ENCODE measurements at regions of chr13 and their contacts with region 1.

Region 1: DNA sequence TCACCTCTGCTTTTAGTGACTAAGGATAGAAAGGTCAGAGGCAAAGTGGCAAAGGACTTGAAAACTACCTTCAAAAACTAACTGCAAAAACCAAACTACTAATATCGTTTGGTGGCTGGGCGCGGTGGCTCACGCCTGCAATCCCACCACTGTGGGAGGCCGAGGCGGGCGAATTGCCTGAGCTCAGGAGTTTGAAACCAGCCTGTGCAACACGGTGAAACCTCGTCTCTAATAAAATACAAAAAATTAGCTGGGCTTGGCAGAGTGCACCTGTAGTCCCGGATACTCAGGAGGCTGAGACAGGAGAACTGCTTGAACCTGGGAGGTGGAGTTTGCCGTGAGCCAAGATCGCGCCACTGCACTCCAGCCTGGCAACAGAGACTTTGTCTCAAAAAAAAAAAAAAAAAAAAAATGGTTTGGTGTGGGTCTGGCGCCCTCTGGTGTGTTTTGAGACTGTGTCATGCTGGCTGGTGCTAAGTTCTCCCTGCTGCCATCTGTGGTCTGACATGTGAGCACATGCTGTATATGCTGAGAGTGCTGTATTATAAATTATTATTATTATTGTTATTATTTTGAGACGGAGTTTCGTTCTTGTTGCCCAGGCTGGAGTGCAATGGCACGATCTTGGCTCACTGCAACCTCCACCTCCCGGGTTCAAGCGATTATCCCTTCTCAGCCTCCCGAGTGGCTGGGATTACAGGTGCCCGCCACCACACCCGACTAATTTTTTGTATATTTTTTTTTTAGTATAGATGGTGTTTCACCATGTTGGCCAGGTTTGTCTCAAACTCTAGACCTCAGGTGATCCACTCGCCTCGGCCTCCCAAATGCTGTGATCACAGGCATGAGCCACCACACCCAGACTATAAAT is 36.0 kb upstream of the RNF17 start:
- DNase-seq: peak; percentile 45 to 84
- H3K4me3 ChIP-seq: no peak overlapping the region
- CTCF ChIP-seq: peak in 1 of 3 donors; percentile 31
- POLR2A ChIP-seq: no peak

Region 2: DNA sequence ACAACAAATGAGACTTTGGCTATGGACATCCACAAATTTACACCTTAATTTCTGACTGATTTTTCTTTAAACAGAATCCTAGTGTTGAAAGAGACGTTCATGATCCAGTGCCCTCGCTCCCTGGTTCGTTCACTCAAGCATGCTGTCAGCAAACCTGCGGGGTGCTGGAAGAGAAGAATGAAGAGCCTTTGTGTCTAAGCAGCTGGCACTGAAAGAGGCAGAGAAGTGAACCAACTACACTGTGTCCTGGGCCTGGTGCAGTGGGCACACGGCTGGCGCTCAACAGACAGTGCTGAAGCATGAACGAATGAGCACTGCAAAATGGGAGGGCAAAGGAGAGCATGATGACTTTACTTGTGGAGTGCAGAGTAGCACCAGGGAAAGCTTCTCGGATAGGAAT is 885.6 kb before region 1 on chr13:
- intact Hi-C with region 1: no loop called
- DNase-seq: no peak
- H3K4me3 ChIP-seq: no peak overlapping the region
- CTCF ChIP-seq: no peak
- POLR2A ChIP-seq: no peak

Region 3: GRCh38 chr13:24574847-24575246 is 153.1 kb before region 1 on chr13:
- intact Hi-C with region 1: loop called (anchors 10 kb)
- DNase-seq: no peak
- H3K4me3 ChIP-seq: no peak overlapping the region
- CTCF ChIP-seq: no peak
- POLR2A ChIP-seq: no peak

Region 4: GRCh38 chr13:24709186-24709913 is 18.6 kb before region 1 on chr13:
- intact Hi-C with region 1: no loop called
- DNase-seq: peak in 1 of 2 donors; percentile 60
- H3K4me3 ChIP-seq: no peak overlapping the region
- CTCF ChIP-seq: no peak
- POLR2A ChIP-seq: no peak

Region 5: DNA sequence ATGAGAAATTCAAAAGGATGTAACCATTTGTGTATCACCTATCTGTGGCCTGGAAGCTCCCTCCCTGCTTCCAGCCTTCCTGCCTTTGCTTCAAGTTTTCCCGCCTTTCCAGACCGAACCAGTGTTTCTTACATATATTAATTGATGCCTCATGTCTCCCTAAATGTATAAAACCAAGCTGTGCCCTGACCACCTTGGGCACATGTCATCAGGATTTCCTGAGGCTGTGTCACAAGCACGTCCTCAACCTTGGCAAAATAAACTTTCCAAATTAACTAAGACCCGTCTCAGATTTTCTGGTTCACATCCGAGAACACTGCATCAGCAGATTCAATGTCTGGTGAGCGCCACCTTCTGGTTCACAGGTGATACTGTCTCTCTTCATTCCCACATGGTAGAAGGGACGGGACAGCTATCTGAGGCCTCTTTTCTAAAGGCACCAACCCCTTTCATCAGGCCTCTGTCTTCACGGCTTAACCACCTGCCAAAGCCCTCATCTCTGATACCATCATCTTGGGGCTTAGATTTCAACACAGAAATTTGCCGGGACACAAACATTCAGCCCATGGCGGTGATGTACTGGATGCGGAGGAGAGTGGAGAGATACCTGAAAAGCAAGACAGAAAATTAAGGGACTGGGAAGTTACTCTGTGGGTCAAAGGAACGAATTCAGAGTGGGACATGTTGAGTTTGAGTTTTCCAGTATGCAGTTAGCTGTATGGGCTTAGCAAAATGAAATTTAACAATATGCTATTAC is 309.3 kb after region 1 on chr13:
- intact Hi-C with region 1: no loop called
- DNase-seq: peak in 1 of 2 donors; percentile 43
- H3K4me3 ChIP-seq: no peak overlapping the region
- CTCF ChIP-seq: no peak
- POLR2A ChIP-seq: no peak